PC-9 (cell line): ENCODE measurements at regions of chr3 and their contacts with region 1.

Region 1: DNA sequence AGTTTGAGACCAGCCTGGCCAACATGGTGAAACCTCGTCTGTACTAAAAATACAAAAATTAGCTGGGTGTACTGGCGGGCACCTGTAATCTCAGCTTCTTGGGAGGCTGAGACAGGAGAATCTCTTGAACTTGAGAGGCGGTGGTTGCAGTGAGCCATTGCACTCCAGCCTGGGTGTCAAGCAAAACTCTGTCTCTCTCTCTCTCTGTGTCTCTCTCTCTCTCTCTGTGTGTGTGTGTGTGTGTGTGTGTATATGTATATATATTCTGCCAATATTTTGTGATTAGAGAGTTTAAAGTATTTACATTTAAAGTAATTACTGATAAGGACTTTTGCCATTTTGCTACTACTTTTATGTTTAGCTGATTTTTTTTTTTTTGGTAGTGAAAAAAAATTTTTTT is 15.7 kb downstream of the RBM6 start:
- DNase-seq: no peak
- H3K4me3 ChIP-seq: no peak overlapping the region
- H3K27ac ChIP-seq: no peak overlapping the region
- H3K4me1 ChIP-seq: no peaks in the 10 kb centered on the region
- H3K27me3 ChIP-seq: no peaks in the 10 kb centered on the region
- CTCF ChIP-seq: no peak

Region 2: DNA sequence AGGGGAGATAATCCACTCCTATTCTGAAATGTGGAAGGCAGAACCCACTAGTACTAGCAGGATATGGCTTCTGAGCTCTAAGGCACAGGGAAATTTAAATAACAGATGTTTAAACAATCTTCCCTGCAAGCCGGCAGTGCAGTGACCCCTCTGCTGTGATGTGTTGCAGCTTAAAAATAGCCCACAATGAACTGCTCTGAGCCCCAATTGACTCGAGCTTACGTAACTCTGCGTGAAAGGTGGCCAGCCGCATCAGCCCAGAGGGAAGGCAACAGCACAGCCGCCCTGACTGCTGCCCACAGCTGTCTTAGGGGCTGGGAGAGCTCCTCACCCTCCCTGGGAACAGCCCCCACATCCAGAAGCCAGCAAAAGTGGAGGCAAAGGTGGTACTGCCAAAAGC is 73.5 kb before region 1 on chr3:
- CTCF ChIA-PET with region 1: no interaction called
- POLR2A ChIA-PET with region 1: interaction called, 11 read pairs
- intact Hi-C with region 1: no loop called
- DNase-seq: no peak
- H3K4me3 ChIP-seq: no peak overlapping the region
- H3K27ac ChIP-seq: no peak overlapping the region
- H3K4me1 ChIP-seq: no peaks in the 10 kb centered on the region
- H3K27me3 ChIP-seq: no peaks in the 10 kb centered on the region
- CTCF ChIP-seq: no peak